ENCODE measurements at regions of chr15 and their contacts with region 1.

Region 1: DNA sequence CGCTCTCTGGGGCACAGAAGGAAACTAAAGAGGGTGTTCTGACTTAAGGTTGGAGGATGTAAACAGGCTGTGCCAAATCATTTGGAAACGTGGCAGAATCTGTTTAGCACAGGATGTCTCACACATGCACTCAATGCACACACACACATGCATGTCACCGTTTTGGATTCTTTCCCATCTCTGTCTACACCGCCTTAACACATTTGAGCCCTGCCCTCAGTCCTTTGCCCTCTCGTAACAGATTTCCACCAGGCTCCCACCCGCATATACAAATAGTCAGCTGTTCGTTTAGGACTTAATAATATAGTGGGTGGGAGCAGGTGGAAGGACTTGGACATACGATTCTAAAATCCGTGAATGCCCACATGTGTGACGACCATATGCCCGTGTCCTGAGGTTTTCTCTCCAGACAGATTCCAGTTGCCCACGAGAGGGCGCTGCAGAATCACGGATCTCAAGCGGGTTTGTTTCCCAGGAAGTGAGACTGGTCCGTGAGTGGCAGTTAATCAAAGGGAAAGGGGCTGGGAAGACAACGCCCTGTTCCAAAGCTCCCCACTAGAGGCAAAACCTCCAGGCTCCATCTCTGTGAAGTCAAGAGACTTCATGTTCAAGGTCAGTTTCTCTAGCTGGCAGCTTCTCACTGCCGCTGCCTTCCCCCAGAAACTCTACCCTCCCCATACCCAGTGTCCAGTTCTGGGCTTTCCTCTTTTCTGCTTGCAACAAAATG is 44.5 kb downstream of the NOX5 start:
- DNase-seq: peak; percentile 89
- H3K4me3 ChIP-seq: peak overlapping the region; percentile 26
- H3K27ac ChIP-seq: peak overlapping the region; percentile 75
- H3K4me1 ChIP-seq: peaks cover 26% of the 10 kb centered on the region
- H3K27me3 ChIP-seq: peaks cover 9% of the 10 kb centered on the region
- CTCF ChIP-seq: peak; percentile 89

Region 2: DNA sequence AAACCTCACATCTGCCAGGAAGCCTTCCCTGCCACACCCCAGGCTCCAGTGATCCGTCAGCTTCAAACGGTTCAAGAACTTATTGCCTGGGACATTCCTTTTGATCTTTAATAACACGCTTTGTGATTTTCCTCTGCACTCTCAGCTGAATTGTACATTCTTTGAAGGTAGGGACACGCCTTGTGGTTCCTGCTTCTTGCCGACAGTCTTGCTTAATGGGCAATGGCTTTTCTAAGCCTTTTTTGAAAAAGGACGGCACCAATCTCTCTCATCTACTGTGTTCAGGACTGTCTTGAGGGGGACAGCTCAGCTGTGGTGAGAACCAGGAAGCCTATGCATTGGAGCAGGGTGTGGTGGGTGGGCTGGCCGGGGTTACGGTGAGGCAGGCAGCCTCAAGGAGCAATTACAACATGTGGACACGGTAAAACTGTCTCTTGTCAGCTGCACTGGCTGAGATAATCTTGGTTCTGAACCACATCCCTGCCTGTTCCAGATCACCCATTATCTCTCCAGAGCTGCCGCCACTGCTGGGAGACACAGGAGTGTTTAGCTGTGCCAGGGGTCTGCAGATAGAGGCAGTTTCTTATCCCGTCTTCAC is 55.4 kb after region 1 on chr15:
- intact Hi-C with region 1: no loop called
- DNase-seq: no peak
- H3K4me3 ChIP-seq: no peak overlapping the region
- H3K27ac ChIP-seq: no peak overlapping the region
- H3K4me1 ChIP-seq: no peaks in the 10 kb centered on the region
- H3K27me3 ChIP-seq: peaks cover 32% of the 10 kb centered on the region
- CTCF ChIP-seq: no peak

Region 3: GRCh38 chr15:69225355-69226025 is 166.5 kb after region 1 on chr15:
- intact Hi-C with region 1: loop called (anchors 10 kb)
- DNase-seq: no peak
- H3K4me3 ChIP-seq: no peak overlapping the region
- H3K27ac ChIP-seq: no peak overlapping the region
- H3K4me1 ChIP-seq: peaks cover 17% of the 10 kb centered on the region
- H3K27me3 ChIP-seq: no peaks in the 10 kb centered on the region
- CTCF ChIP-seq: peak; percentile 46

Region 4: DNA sequence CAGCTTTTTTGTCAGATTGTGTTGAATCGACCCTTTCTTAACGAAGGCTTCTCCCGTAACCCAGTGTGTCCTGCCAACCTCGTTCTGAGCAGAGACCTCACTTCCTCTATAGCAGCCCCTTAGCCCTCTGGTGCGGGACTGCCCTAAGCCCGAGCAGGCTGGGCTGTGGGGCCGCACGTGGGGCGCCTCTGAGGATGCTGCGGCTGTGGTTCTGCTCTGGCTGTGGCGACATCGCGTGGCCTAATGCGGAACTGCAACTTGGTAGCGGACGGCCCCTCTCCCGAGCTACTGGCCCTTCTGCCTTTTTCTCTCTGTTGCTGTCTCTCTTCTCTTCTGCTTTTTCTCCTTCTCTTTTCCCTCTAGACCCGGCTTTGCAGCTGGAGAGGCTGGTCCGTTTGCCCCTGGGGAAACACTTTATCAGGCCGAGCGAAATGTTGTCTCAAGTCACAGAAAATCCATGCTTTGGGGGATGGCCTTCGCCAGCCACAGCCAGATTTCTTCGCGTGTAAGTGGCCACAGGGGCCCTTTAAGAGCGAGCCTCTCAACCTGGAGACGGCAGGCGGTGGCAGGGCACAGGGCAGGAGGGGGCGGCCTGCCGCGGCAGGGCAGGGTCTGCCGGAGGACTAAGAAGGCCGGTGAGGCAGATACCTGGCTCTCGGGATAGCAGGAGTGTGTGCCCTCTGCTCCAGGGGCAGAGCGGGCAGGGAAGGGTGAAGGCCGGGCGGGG is 335.7 kb after region 1 on chr15:
- intact Hi-C with region 1: loop called (anchors 2 kb)
- DNase-seq: peak; percentile 83
- H3K4me3 ChIP-seq: peak overlapping the region; percentile 34
- H3K27ac ChIP-seq: no peak overlapping the region
- H3K4me1 ChIP-seq: peaks cover 15% of the 10 kb centered on the region
- H3K27me3 ChIP-seq: peaks cover 5% of the 10 kb centered on the region
- CTCF ChIP-seq: peak; percentile 97

Region 5: DNA sequence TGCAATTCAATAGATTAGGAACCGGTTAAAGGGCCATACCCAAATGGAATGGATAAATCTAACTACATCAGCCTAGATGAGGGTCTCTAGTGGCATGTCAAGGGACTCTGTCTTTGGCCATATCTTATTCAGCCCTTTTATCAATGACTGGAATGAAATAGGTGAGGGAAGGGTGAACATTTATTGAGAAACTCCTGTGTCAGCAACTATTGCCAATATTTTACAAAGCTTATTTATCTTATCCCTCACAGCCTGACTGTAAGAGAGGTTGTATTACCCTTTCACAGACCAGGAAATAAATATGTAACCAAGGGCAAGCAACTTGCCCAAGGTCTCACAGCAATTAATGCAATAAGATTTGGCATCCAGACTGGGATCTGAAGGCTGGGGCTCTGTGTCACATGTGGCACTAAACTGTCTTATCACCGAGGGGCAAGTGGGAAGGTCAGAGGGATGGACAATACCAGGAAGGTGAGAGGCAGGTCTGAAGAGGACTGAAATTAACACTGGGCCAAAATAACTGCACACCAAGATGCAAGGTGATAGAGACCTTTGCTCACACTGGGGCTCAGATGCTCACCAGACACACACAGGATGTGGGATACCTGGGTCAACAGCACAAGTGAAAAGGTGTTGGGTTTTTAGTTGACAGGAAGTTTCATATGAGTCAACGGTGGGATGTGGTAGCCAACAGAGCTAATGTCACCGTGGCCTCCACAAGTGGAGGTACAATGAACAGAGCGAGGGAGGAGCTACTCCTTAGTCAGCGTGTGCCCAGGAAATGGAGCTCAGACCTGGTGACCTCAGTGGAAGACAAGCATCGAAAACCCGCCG is 655.0 kb after region 1 on chr15:
- intact Hi-C with region 1: no loop called
- DNase-seq: no peak
- H3K4me3 ChIP-seq: no peak overlapping the region
- H3K27ac ChIP-seq: no peak overlapping the region
- H3K4me1 ChIP-seq: no peaks in the 10 kb centered on the region
- H3K27me3 ChIP-seq: peaks cover 86% of the 10 kb centered on the region
- CTCF ChIP-seq: no peak